Naive thymus-derived CD4-positive, alpha-beta T cell (primary cell): ENCODE measurements at regions of chr5 and their contacts with region 1.

Region 1: DNA sequence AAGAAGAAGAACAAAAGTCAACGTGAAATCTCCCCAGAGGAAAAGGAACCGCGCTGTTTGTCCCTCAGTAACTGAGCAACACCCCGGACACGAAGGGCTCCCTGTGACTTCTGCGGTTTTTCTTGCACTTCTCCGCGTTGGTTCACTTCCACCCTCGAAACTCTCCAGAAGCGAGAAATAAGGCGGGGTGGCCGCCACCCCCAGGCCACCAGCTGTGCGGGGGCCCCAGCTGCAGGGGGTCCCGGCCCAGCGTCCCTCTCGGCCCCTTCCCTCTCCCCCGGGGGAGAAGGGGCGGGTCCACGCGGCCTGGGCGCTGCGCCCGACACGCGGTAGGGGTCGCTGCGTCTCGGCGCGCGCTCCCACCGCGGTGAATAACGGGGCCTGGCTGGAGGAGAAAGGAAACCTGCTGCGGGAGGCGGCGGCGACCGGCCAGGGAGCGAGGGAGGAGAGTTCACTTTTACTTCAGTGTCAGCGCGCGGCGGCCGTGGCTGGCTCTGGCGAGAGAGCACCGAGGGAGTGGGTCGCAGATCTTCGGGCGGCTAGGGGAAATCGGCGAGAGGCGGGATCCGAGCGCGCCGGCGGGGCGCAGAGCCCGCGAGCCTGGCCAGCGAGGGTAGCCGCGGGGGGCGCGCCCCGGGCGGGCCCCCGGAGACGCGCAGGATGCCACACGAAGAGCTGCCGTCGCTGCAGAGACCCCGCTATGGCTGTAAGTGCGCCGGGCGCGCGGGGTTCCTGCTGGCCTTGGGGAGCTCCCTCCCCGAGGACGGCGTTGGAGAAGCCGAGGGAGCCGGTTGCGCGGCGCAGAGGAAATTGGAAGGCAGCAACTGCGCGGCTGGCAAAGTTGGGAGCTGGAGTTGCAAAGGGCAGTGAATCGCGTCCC is at the start of gene IQGAP2:
- DNase-seq: peak; percentile 88 to 94 (median 90)
- ATAC-seq: peak; percentile 73
- H3K4me3 ChIP-seq: peak within 1 kb of the TSS; percentile 81
- H3K4me3 Mint-ChIP-seq: peak within 1 kb of the TSS; percentile 87 to 99 (median 92)
- H3K27ac ChIP-seq: peak within 1 kb of the TSS; percentile 94
- H3K27ac Mint-ChIP-seq: peak within 1 kb of the TSS; percentile 94 to 100 (median 97)
- H3K4me1 ChIP-seq: peaks cover 19 to 20% of the 10 kb centered on the region in 2 donors
- H3K4me1 Mint-ChIP-seq: peaks cover 35 to 62% (median 55%) of the 10 kb centered on the region in 7 donors
- H3K27me3 ChIP-seq: no peaks in the 10 kb centered on the region
- H3K27me3 Mint-ChIP-seq: peaks cover 0 to 14% (median 0%) of the 10 kb centered on the region in 5 donors
- total RNA-seq, gene IQGAP2: 69.1 to 114 (median 88.0) TPM

Region 2: DNA sequence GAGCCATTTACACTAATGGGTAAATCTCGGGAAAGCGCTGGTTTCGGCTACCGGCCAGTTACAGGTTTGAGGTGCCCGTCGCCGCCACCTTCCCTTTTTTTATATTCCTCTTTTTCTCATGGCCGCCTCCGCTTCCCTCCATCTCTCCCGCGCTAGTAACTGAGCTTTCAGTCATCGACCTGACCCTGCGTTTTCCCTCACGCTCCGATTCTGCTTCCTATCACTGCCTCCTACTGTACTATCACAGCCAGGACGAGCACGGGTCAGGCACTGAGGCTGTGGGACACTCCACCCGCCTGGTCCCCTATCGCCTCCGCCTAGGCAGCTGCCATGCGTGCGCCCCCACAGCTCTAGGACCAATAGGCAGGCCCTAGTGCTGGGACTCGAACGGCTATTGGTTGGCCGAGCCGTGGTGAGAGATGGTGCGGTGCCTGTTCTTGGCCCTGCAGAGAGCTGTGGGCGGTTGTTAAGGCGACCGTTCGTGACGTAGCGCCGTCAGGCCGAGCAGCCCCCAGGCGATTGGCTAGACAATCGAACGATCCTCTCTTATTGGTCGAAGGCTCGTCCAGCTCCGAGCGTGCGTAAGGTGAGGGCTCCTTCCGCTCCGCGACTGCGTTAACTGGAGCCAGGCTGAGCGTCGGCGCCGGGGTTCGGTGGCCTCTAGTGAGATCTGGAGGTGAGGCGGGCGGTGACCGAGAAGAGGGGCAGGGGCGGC is 1066.3 kb before region 1 on chr5 and contains the start of gene HMGCR:
- CTCF ChIA-PET with region 1: no interaction called
- POLR2A ChIA-PET with region 1: no interaction called
- intact Hi-C with region 1: loop called in 1 of 2 experiments (anchors 5 kb)
- DNase-seq: peak; percentile 82 to 97 (median 95)
- ATAC-seq: peak; percentile 96
- H3K4me3 ChIP-seq: peak within 1 kb of the TSS; percentile 85
- H3K4me3 Mint-ChIP-seq: no peak within 1 kb of the TSS
- H3K27ac ChIP-seq: peak within 1 kb of the TSS; percentile 83
- H3K27ac Mint-ChIP-seq: no peak within 1 kb of the TSS
- H3K4me1 ChIP-seq: peaks cover 8 to 10% of the 10 kb centered on the region in 2 donors
- H3K4me1 Mint-ChIP-seq: peaks cover 18 to 41% (median 37%) of the 10 kb centered on the region in 7 donors
- H3K27me3 ChIP-seq: no peaks in the 10 kb centered on the region
- H3K27me3 Mint-ChIP-seq: no peaks in the 10 kb centered on the region
- total RNA-seq, gene HMGCR: 38.8 to 57.3 (median 43.8) TPM

Region 3: GRCh38 chr5:76050179-76050578 is 352.9 kb before region 1 on chr5:
- CTCF ChIA-PET with region 1: no interaction called
- POLR2A ChIA-PET with region 1: no interaction called
- intact Hi-C with region 1: no loop called
- DNase-seq: no peak
- ATAC-seq: no peak
- H3K4me3 ChIP-seq: no peak overlapping the region
- H3K4me3 Mint-ChIP-seq: no peak overlapping the region
- H3K27ac ChIP-seq: no peak overlapping the region
- H3K27ac Mint-ChIP-seq: no peak overlapping the region
- H3K4me1 ChIP-seq: no peaks in the 10 kb centered on the region
- H3K4me1 Mint-ChIP-seq: no peaks in the 10 kb centered on the region
- H3K27me3 ChIP-seq: no peaks in the 10 kb centered on the region
- H3K27me3 Mint-ChIP-seq: peaks cover 23 to 34% (median 24%) of the 10 kb centered on the region in 5 donors

Region 4: GRCh38 chr5:76099286-76099702 is 303.8 kb before region 1 on chr5:
- CTCF ChIA-PET with region 1: no interaction called
- POLR2A ChIA-PET with region 1: no interaction called
- intact Hi-C with region 1: loop called in 1 of 2 experiments (anchors 5 kb)
- DNase-seq: peak in 7 of 9 donors; percentile 4 to 67 (median 56)
- ATAC-seq: peak; percentile 92
- H3K4me3 ChIP-seq: no peak overlapping the region
- H3K4me3 Mint-ChIP-seq: peak overlapping the region in 2 of 10 donors; percentile 0
- H3K27ac ChIP-seq: no peak overlapping the region
- H3K27ac Mint-ChIP-seq: peak overlapping the region in 4 of 9 donors; percentile 10 to 68 (median 16)
- H3K4me1 ChIP-seq: no peaks in the 10 kb centered on the region
- H3K4me1 Mint-ChIP-seq: peaks cover 7 to 13% (median 9%) of the 10 kb centered on the region in 7 donors
- H3K27me3 ChIP-seq: no peaks in the 10 kb centered on the region
- H3K27me3 Mint-ChIP-seq: peaks cover 5 to 38% (median 18%) of the 10 kb centered on the region in 5 donors

Region 5: DNA sequence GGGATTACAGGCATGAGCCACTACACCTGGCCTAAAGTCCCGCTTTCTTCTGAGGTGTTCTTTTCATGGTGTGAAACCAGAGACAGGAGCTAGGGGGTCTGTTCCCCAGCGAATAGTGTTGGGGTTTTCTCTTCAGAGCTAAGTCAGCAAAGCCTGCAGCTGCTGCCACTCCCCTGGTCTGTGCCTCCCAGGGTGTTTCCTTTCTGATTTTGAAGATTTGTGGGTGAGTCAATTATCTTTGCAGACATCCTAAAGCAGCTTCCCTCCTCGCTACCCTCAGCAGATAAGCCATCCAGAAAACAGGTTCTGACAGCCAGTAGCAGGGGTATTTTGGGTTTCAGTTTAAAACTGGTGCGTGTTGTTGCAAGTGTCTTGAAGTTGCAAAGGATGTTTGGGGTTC is 72.0 kb before region 1 on chr5:
- CTCF ChIA-PET with region 1: interaction called, 11 read pairs
- POLR2A ChIA-PET with region 1: interaction called, 29 read pairs
- intact Hi-C with region 1: loop called in 1 of 2 experiments (anchors 1 kb)
- DNase-seq: peak in 7 of 9 donors; percentile 12 to 47 (median 29)
- ATAC-seq: peak; percentile 72
- H3K4me3 ChIP-seq: no peak overlapping the region
- H3K4me3 Mint-ChIP-seq: peak overlapping the region; percentile 20 to 74 (median 56)
- H3K27ac ChIP-seq: peak overlapping the region; percentile 38
- H3K27ac Mint-ChIP-seq: peak overlapping the region; percentile 70 to 98 (median 85)
- H3K4me1 ChIP-seq: peaks cover 26 to 60% of the 10 kb centered on the region in 2 donors
- H3K4me1 Mint-ChIP-seq: peaks cover 43 to 71% (median 68%) of the 10 kb centered on the region in 7 donors
- H3K27me3 ChIP-seq: no peaks in the 10 kb centered on the region
- H3K27me3 Mint-ChIP-seq: no peaks in the 10 kb centered on the region

Region 6: GRCh38 chr5:76473661-76474060 is 70.5 kb after region 1 on chr5:
- CTCF ChIA-PET with region 1: interaction called, 20 read pairs
- POLR2A ChIA-PET with region 1: interaction called, 24 read pairs
- intact Hi-C with region 1: loop called (anchors 1 kb)
- DNase-seq: peak; percentile 13 to 89 (median 83)
- ATAC-seq: peak; percentile 95
- H3K4me3 ChIP-seq: no peak overlapping the region
- H3K4me3 Mint-ChIP-seq: peak overlapping the region; percentile 19 to 78 (median 58)
- H3K27ac ChIP-seq: peak overlapping the region; percentile 59
- H3K27ac Mint-ChIP-seq: peak overlapping the region; percentile 72 to 98 (median 93)
- H3K4me1 ChIP-seq: peaks cover 54 to 67% of the 10 kb centered on the region in 2 donors
- H3K4me1 Mint-ChIP-seq: peaks cover 56 to 88% (median 79%) of the 10 kb centered on the region in 7 donors
- H3K27me3 ChIP-seq: no peaks in the 10 kb centered on the region
- H3K27me3 Mint-ChIP-seq: no peaks in the 10 kb centered on the region

Region 7: DNA sequence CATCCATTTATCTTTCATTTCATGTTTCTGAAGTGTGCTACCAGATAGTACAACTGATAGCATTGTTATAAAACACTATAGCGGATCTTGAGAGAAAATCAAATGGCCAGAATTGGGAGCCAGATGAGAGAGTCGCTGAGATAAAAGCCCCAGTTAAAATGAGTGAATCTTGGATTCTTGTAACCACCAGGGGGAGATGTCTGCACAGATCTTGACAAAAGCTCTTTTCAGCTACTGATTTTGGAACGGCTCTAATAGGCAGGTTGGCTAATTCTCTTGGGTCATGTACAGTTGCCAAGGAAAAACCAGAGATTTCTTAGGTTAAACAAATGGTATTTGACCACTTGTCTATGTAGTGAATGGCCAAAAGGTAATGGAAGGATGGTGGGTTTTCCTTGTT is 198.3 kb after region 1 on chr5:
- CTCF ChIA-PET with region 1: no interaction called
- POLR2A ChIA-PET with region 1: no interaction called
- intact Hi-C with region 1: loop called in 1 of 2 experiments (anchors 1 kb)
- DNase-seq: peak in 7 of 9 donors; percentile 7 to 60 (median 48)
- ATAC-seq: peak; percentile 80
- H3K4me3 ChIP-seq: no peak overlapping the region
- H3K4me3 Mint-ChIP-seq: no peak overlapping the region
- H3K27ac ChIP-seq: no peak overlapping the region
- H3K27ac Mint-ChIP-seq: peak overlapping the region in 3 of 9 donors; percentile 6 to 54 (median 36)
- H3K4me1 ChIP-seq: no peaks in the 10 kb centered on the region
- H3K4me1 Mint-ChIP-seq: peaks cover 0 to 11% (median 2%) of the 10 kb centered on the region in 7 donors
- H3K27me3 ChIP-seq: no peaks in the 10 kb centered on the region
- H3K27me3 Mint-ChIP-seq: no peaks in the 10 kb centered on the region

Region 8: GRCh38 chr5:76771705-76772405 is 368.7 kb after region 1 on chr5:
- CTCF ChIA-PET with region 1: no interaction called
- POLR2A ChIA-PET with region 1: no interaction called
- intact Hi-C with region 1: loop called (anchors 1 to 2 kb)
- DNase-seq: no peak
- ATAC-seq: no peak
- H3K4me3 ChIP-seq: no peak overlapping the region
- H3K4me3 Mint-ChIP-seq: no peak overlapping the region
- H3K27ac ChIP-seq: no peak overlapping the region
- H3K27ac Mint-ChIP-seq: peak overlapping the region in 2 of 9 donors; percentile 6 to 32
- H3K4me1 ChIP-seq: no peaks in the 10 kb centered on the region
- H3K4me1 Mint-ChIP-seq: peaks cover 0 to 7% (median 3%) of the 10 kb centered on the region in 7 donors
- H3K27me3 ChIP-seq: no peaks in the 10 kb centered on the region
- H3K27me3 Mint-ChIP-seq: peaks cover 0 to 4% (median 0%) of the 10 kb centered on the region in 5 donors